Activated CD8-positive, alpha-beta T cell treated with anti-CD3 and anti-CD28 coated beads, Interleukin-2, amount 10 ng/mL, durations not matched to agents 7 days and 5 days (primary cell): ENCODE measurements at regions of chr7 and their contacts with region 1.

Region 1: GRCh38 chr7:37352974-37353948 is 95.4 kb downstream of the ELMO1 start:
- DNase-seq: peak; percentile 83
- ATAC-seq: peak; percentile 87
- H3K4me3 Mint-ChIP-seq: peak overlapping the region; percentile 88
- H3K27ac Mint-ChIP-seq: peak overlapping the region; percentile 77
- H3K4me1 Mint-ChIP-seq: peaks cover 54% of the 10 kb centered on the region
- H3K27me3 Mint-ChIP-seq: no peaks in the 10 kb centered on the region

Region 2: DNA sequence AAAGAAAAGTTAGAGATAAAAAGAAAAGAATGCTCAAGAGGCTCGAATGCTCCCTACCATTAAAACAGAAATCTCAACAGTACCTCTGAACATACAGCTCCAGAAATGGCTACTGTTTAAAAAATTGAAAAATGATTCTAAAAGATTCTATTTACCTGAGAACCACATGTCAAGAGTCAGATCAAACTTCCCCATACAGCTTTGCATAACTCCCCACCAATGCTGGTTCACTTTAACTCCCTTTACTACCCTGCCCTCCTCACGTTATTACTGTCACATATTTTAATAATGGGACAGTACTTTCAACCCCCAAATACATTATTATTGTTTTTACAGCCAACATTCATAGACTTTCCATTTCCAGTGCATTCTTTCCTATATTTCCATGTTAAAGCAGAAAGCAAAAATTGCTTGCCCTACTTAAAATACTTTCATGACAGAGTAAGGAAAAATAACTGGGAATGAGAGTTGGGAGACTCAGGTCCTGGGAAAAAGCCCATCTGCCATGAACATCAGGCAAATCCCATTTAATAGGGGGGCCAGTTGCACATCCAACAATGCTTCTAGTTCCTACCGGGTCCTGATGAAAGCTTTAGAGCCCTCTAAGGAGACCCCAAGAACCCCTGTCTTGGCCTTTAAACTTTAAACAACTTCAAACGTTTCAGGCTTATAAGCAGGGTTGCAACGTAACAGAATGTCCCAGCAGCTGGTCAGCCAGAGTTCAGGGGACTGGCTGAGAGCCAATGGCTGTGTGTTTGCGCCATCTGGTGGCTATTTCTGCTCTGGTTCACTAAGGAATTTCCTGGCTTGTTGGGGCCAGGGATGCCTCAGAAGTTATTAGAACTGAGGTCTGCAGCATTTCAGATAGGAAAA is 152.0 kb before region 1 on chr7:
- CTCF ChIA-PET with region 1: interaction called, 16 read pairs
- POLR2A ChIA-PET with region 1: no interaction called
- DNase-seq: peak; percentile 66
- ATAC-seq: peak; percentile 45
- H3K4me3 Mint-ChIP-seq: no peak overlapping the region
- H3K27ac Mint-ChIP-seq: no peak overlapping the region
- H3K4me1 Mint-ChIP-seq: peaks cover 2% of the 10 kb centered on the region
- H3K27me3 Mint-ChIP-seq: no peaks in the 10 kb centered on the region

Region 3: DNA sequence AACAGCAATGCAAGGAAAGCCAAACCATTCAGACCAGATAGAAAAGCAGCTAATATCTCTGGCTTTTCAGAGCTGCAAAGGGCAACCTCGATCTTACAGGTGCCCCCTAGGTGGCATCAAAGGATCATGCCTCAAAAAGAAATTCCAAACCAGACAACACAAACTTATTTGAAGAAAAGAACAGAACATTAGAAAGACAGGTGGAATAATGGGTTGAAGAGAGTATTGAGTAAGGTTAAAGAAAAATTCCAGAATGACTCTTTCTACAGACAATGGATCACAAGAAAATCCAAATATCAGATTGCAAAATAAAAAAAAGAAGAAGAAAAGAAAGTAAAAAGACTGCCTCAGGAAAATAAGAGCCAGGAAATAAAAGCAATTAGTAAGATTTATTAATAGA is 118.3 kb before region 1 on chr7:
- CTCF ChIA-PET with region 1: interaction called, 43 read pairs
- POLR2A ChIA-PET with region 1: interaction called, 3 read pairs
- DNase-seq: peak; percentile 31
- ATAC-seq: no peak
- H3K4me3 Mint-ChIP-seq: no peak overlapping the region
- H3K27ac Mint-ChIP-seq: no peak overlapping the region
- H3K4me1 Mint-ChIP-seq: peaks cover 4% of the 10 kb centered on the region
- H3K27me3 Mint-ChIP-seq: no peaks in the 10 kb centered on the region

Region 4: GRCh38 chr7:37284805-37285231 is 68.4 kb before region 1 on chr7:
- CTCF ChIA-PET with region 1: interaction called, 64 read pairs
- POLR2A ChIA-PET with region 1: no interaction called
- DNase-seq: peak; percentile 49
- ATAC-seq: no peak
- H3K4me3 Mint-ChIP-seq: no peak overlapping the region
- H3K27ac Mint-ChIP-seq: no peak overlapping the region
- H3K4me1 Mint-ChIP-seq: peaks cover 26% of the 10 kb centered on the region
- H3K27me3 Mint-ChIP-seq: no peaks in the 10 kb centered on the region

Region 5: GRCh38 chr7:37333075-37333474 is 20.2 kb before region 1 on chr7:
- CTCF ChIA-PET with region 1: interaction called, 10 read pairs
- POLR2A ChIA-PET with region 1: no interaction called
- DNase-seq: no peak
- ATAC-seq: no peak
- H3K4me3 Mint-ChIP-seq: no peak overlapping the region
- H3K27ac Mint-ChIP-seq: peak overlapping the region; percentile 16
- H3K4me1 Mint-ChIP-seq: peaks cover 39% of the 10 kb centered on the region
- H3K27me3 Mint-ChIP-seq: no peaks in the 10 kb centered on the region

Region 6: GRCh38 chr7:37363536-37364491 is 10.6 kb after region 1 on chr7:
- CTCF ChIA-PET with region 1: interaction called, 14 read pairs
- POLR2A ChIA-PET with region 1: interaction called, 3 read pairs
- DNase-seq: no peak
- ATAC-seq: no peak
- H3K4me3 Mint-ChIP-seq: no peak overlapping the region
- H3K27ac Mint-ChIP-seq: peak overlapping the region; percentile 70
- H3K4me1 Mint-ChIP-seq: peaks cover 52% of the 10 kb centered on the region
- H3K27me3 Mint-ChIP-seq: peaks cover 8% of the 10 kb centered on the region

Region 7: DNA sequence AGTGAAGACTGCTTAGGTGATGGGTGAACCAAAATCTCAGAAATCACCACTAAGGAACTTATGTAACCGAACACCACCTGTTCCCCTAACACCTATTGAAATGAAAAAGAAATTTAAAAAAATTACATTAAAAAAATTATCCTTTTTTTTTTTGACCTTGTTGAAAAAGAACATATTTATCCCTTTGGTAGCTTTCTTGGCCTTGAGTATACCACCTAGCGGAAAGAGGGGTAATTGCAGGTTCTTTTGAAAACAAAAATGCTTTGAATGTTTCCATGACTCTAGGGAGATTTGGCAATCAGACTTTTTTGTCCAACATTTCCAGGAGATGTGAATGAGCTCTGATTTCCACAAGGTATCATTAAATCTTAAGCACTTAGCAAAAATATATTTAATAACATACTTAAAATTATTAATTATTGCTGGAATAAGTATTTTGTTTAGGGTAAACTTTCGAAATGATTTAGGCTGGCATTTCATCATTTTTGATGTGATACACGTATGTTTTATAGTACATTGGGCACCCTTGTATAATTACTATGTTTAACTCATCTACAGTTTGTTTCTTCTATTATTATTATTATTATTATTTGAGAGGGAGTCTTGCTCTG is 142.4 kb after region 1 on chr7:
- CTCF ChIA-PET with region 1: interaction called, 11 read pairs
- POLR2A ChIA-PET with region 1: no interaction called
- DNase-seq: no peak
- ATAC-seq: no peak
- H3K4me3 Mint-ChIP-seq: no peak overlapping the region
- H3K27ac Mint-ChIP-seq: no peak overlapping the region
- H3K4me1 Mint-ChIP-seq: peaks cover 5% of the 10 kb centered on the region
- H3K27me3 Mint-ChIP-seq: no peaks in the 10 kb centered on the region